A673 (cell line): ENCODE measurements at regions of chr6 and their contacts with region 1.

Region 1: GRCh38 chr6:17820055-17820454 is 113.3 kb upstream of the NUP153 start:
- DNase-seq: peak; percentile 7
- H3K4me3 ChIP-seq: no peak overlapping the region
- H3K27ac ChIP-seq: no peak overlapping the region
- H3K4me1 ChIP-seq: no peaks in the 10 kb centered on the region
- H3K27me3 ChIP-seq: no peaks in the 10 kb centered on the region
- CTCF ChIP-seq: no peak

Region 2: GRCh38 chr6:17156112-17156921 is 663.7 kb before region 1 on chr6:
- CTCF ChIA-PET with region 1: no interaction called
- POLR2A ChIA-PET with region 1: no interaction called
- intact Hi-C with region 1: loop called (anchors 2 kb)
- DNase-seq: peak; percentile 85
- H3K4me3 ChIP-seq: no peak overlapping the region
- H3K27ac ChIP-seq: no peak overlapping the region
- H3K4me1 ChIP-seq: no peaks in the 10 kb centered on the region
- H3K27me3 ChIP-seq: no peaks in the 10 kb centered on the region
- CTCF ChIP-seq: peak; percentile 84

Region 3: DNA sequence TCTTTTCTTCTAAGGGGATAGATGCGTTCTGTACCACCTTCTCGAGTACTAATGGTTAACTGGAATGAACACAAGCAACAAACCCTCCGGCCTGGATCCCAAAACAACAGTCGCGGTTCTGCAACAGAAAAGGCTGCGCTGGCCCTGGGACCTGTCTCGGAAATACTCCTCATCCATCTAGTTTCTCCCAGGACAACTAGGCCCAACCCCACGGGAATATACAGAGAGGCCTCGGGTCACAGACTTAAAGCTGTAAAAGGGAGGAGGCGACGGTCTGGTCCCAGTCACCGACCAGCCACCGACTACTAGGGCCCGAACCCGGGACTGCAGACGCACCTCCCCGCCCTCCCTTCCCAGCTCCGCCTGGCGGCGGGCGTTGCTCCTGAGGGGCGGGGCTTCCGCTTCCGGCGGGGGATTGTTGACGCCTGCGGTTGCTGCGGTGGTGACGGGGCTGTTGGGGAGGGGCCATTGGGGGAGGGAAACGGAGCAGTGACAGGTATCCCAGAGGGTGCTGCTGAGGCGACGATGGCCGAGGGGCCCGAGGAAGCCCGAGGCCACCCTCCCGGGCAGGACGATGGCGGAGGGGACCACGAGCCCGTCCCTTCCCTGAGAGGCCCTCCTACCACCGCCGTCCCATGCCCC is 220.0 kb before region 1 on chr6 and contains the start of gene FAM8A1:
- CTCF ChIA-PET with region 1: interaction called, 7 read pairs
- POLR2A ChIA-PET with region 1: no interaction called
- intact Hi-C with region 1: loop called (anchors 5 kb)
- DNase-seq: peak; percentile 96
- H3K4me3 ChIP-seq: peak within 1 kb of the TSS; percentile 90
- H3K27ac ChIP-seq: peak within 1 kb of the TSS; percentile 88
- H3K4me1 ChIP-seq: peaks cover 14% of the 10 kb centered on the region
- H3K27me3 ChIP-seq: no peaks in the 10 kb centered on the region
- CTCF ChIP-seq: peak; percentile 45
- total RNA-seq, gene FAM8A1: 15.7 and 16.2 TPM in 2 replicates

Region 4: DNA sequence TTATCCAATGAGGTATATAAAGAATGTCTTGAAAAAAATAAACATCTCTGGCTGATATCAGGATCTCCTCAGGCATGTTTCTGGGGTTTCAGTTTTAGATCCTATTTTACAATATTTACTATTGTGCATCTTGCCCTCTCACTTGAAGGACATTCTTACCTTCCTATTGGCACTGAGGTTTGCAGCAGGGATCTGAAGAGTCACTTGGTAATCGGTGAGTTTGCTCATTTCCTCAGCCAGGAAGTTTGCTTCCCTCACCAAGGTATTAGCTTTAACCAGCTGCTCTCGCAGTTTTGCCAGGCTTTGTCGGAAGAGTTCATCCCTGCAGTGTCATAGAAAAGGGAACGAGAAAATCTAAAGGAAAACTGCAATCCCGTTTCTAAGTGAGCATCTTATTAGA is 11.4 kb before region 1 on chr6:
- CTCF ChIA-PET with region 1: no interaction called
- POLR2A ChIA-PET with region 1: no interaction called
- intact Hi-C with region 1: no loop called
- DNase-seq: no peak
- H3K4me3 ChIP-seq: no peak overlapping the region
- H3K27ac ChIP-seq: no peak overlapping the region
- H3K4me1 ChIP-seq: no peaks in the 10 kb centered on the region
- H3K27me3 ChIP-seq: no peaks in the 10 kb centered on the region
- CTCF ChIP-seq: no peak

Region 5: DNA sequence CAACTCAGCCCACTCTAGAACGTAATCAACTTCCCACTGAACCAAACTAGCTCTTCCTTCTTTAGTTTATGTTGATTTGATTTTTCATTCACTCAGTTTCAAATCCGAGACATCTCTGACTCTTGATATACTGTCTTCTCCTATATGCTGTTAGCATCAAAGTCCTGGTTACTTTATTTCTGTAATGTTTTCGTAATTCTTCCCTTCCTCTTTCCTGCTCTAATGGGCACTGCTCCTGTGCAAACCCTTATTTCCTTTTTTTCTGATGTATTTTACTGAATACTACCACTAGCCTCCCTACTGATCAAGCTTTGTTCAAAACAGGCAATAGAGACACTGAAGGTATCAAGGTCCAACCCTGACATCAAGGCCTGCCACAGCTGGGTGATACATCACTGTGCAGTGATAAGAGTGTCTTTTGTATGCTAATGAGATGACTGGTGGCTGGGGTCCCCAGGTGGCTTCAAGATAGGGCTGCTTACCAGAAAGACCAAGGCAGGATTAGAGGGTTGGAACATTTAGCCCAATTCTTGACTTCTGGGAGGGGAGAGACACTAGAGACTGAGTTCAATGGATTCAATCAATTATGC is 72.1 kb after region 1 on chr6:
- CTCF ChIA-PET with region 1: no interaction called
- POLR2A ChIA-PET with region 1: no interaction called
- intact Hi-C with region 1: no loop called
- DNase-seq: no peak
- H3K4me3 ChIP-seq: no peak overlapping the region
- H3K27ac ChIP-seq: no peak overlapping the region
- H3K4me1 ChIP-seq: no peaks in the 10 kb centered on the region
- H3K27me3 ChIP-seq: no peaks in the 10 kb centered on the region
- CTCF ChIP-seq: no peak

Region 6: DNA sequence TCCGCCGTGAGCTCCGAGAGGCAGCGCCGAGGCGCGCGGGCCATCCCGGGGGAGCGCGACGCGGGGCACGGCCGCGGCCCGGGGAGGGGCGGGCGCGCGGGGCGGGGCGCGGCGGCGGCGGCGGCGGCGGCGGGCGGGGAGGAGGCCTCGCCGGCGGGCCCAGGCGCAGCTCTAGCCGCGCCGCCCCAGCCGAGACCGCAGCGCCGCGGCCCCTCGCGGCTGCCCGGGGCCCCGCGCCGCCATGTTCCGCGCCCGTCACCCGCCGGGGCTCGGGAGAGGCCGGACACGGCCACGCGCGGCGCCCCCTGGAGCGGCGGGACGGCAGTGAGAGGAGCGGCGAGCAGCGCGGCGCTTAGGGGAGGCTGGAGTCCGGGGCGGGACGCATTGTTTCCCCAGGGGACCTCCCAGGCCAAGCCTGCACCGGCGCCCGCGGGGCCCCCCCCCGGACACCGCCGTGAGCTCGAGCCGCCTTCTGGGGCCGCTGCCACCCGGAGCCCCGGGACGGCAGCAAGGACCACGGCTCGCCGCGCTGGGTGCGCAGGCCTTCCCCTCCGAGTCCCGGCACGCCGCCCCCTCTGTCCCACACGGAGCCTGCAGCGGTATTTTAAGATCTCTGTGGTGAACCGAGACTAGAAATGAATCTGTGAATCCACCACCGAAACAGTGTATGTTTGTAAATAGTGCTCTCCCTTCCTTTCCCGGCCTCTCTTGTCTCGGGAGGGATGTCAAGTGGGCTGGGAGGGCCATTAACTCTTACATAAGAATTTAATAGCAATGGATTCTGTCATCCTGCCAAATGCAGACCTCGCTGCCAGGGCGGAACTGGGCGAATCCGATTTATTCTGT is 167.7 kb after region 1 on chr6 and contains the start of gene KIF13A:
- CTCF ChIA-PET with region 1: no interaction called
- POLR2A ChIA-PET with region 1: no interaction called
- intact Hi-C with region 1: loop called (anchors 5 kb)
- DNase-seq: peak; percentile 79
- H3K4me3 ChIP-seq: peak within 1 kb of the TSS; percentile 66
- H3K27ac ChIP-seq: peak within 1 kb of the TSS; percentile 79
- H3K4me1 ChIP-seq: peaks cover 17% of the 10 kb centered on the region
- H3K27me3 ChIP-seq: no peaks in the 10 kb centered on the region
- CTCF ChIP-seq: no peak
- total RNA-seq, gene KIF13A: 19.7 and 21.1 TPM in 2 replicates

Region 7: DNA sequence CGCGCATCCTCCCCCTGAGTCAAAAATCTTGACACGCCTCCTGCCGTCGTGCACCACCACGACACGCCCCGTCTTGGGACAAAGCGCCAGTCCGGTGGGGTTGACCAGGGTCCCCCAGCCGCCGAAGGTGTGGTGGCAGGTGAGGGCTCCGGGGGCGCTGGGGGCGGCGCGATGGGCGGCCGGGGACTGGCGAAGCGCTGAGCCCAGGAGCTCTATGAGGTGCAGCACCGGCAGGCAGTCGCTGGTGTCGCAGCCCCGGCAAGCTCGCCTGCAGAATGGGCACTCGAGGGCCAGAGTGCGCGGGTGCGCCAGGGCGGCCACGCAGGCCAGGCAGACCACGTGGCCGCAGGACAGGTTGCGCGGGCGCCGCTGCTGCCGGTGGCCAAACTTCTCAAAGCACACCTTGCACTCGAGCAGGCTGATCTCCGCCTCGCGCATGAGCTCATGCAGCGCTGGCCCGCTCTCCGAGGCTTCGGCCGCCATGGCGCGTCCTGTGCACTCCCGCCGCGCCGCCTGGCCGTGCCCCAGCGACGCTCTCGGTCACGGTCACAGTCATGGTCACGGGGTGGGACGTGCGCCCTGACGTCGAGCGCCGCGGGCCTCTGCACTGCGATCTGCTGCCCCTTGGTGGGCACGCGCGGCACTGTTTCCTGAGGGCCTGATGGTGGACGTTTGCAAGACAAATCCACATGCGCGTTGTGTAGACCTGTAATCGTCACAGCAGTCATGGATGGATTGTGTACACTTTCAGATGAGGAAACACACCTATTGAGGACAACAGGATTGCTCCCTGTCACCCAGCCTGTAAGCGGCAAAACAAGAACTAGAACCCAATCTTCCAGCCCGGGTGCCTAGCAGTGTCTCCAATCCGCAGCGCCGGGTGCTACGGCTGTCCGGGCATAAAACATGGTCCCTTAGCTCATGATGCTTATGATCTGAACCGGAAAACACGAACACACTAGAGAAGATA is 302.4 kb after region 1 on chr6 and contains the start of gene NHLRC1:
- CTCF ChIA-PET with region 1: interaction called, 7 read pairs
- POLR2A ChIA-PET with region 1: no interaction called
- intact Hi-C with region 1: loop called (anchors 5 kb)
- DNase-seq: peak; percentile 94
- H3K4me3 ChIP-seq: peak within 1 kb of the TSS; percentile 51
- H3K27ac ChIP-seq: peak within 1 kb of the TSS; percentile 64
- H3K4me1 ChIP-seq: peaks cover 11% of the 10 kb centered on the region
- H3K27me3 ChIP-seq: no peaks in the 10 kb centered on the region
- CTCF ChIP-seq: peak; percentile 96
- total RNA-seq, gene NHLRC1: 3.8 and 4.3 TPM in 2 replicates

Region 8: GRCh38 chr6:18503593-18504231 is 683.7 kb after region 1 on chr6:
- CTCF ChIA-PET with region 1: no interaction called
- POLR2A ChIA-PET with region 1: no interaction called
- intact Hi-C with region 1: loop called (anchors 5 kb)
- DNase-seq: peak; percentile 88
- H3K4me3 ChIP-seq: no peak overlapping the region
- H3K27ac ChIP-seq: no peak overlapping the region
- H3K4me1 ChIP-seq: peaks cover 30% of the 10 kb centered on the region
- H3K27me3 ChIP-seq: no peaks in the 10 kb centered on the region
- CTCF ChIP-seq: peak; percentile 92